GM10248 (cell line): ENCODE measurements at regions of chr1 and their contacts with region 1.

Region 1: GRCh38 chr1:172373864-172374263 is 46.6 kb upstream of the C1orf105 start:
- DNase-seq: no peak
- CTCF ChIP-seq: no peak

Region 2: GRCh38 chr1:172390683-172391551 is 17.1 kb after region 1 on chr1:
- CTCF ChIA-PET with region 1: interaction called, 10 read pairs
- POLR2A ChIA-PET with region 1: no interaction called
- DNase-seq: peak; percentile 44
- CTCF ChIP-seq: no peak